ENCODE measurements at regions of chr3 and their contacts with region 1.

Region 1: GRCh38 chr3:127455541-127456450 is 134.7 kb downstream of the TPRA1 start:
- DNase-seq: peak; percentile 67
- H3K4me3 ChIP-seq: peak overlapping the region; percentile 48 to 64 (median 51)
- H3K27ac ChIP-seq: peak overlapping the region; percentile 65
- H3K4me1 ChIP-seq: peaks cover 33% of the 10 kb centered on the region
- H3K27me3 ChIP-seq: no peaks in the 10 kb centered on the region
- CTCF ChIP-seq: peak; percentile 62 to 83

Region 2: GRCh38 chr3:126679318-126679751 is 776.5 kb before region 1 on chr3:
- CTCF ChIA-PET with region 1: no interaction called
- dilution Hi-C with region 1: no loop called
- in situ Hi-C with region 1: loop called (anchors 10 to 25 kb)
- intact Hi-C with region 1: loop called (anchors 1 kb)
- DNase-seq: peak; percentile 55
- H3K4me3 ChIP-seq: peak overlapping the region in 1 of 3 experiments; percentile 15
- H3K27ac ChIP-seq: no peak overlapping the region
- H3K4me1 ChIP-seq: peaks cover 5% of the 10 kb centered on the region
- H3K27me3 ChIP-seq: no peaks in the 10 kb centered on the region
- CTCF ChIP-seq: peak; percentile 90 to 95

Region 3: DNA sequence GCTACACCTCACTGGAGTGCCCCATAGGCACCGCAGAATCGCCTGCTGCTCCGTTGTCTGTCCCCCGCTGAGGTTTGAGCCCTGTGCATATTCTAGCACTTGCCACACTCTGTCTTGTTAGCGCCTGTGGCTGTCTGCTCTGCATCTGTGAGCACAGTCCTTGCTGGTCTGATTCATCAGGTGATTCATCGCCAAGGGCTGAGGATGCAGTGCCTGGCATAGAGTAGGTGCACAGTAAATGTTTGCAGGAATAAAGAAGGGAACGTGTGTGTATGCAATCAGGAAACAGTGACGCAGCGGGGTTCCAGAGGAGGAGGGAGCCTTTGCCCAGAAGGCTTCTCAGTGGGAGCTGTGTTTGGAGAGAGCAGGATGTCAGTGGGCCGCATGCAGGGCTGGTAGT is 596.9 kb before region 1 on chr3:
- CTCF ChIA-PET with region 1: no interaction called
- dilution Hi-C with region 1: no loop called
- in situ Hi-C with region 1: no loop called
- intact Hi-C with region 1: loop called (anchors 5 kb)
- DNase-seq: peak; percentile 97
- H3K4me3 ChIP-seq: no peak overlapping the region
- H3K27ac ChIP-seq: peak overlapping the region; percentile 36
- H3K4me1 ChIP-seq: peaks cover 20% of the 10 kb centered on the region
- H3K27me3 ChIP-seq: no peaks in the 10 kb centered on the region
- CTCF ChIP-seq: no peak

Region 4: GRCh38 chr3:127002195-127003174 is 453.3 kb before region 1 on chr3:
- CTCF ChIA-PET with region 1: interaction called, 8 read pairs
- dilution Hi-C with region 1: no loop called
- in situ Hi-C with region 1: loop called in 1 of 2 experiments (anchors 10 kb)
- intact Hi-C with region 1: loop called (anchors 1 kb)
- DNase-seq: peak; percentile 82
- H3K4me3 ChIP-seq: peak overlapping the region in 2 of 3 experiments; percentile 18 to 20
- H3K27ac ChIP-seq: peak overlapping the region; percentile 42
- H3K4me1 ChIP-seq: peaks cover 63% of the 10 kb centered on the region
- H3K27me3 ChIP-seq: no peaks in the 10 kb centered on the region
- CTCF ChIP-seq: peak; percentile 45 to 64

Region 5: GRCh38 chr3:127177231-127177630 is 278.6 kb before region 1 on chr3:
- CTCF ChIA-PET with region 1: no interaction called
- dilution Hi-C with region 1: no loop called
- in situ Hi-C with region 1: no loop called
- intact Hi-C with region 1: loop called (anchors 5 kb)
- DNase-seq: no peak
- H3K4me3 ChIP-seq: no peak overlapping the region
- H3K27ac ChIP-seq: no peak overlapping the region
- H3K4me1 ChIP-seq: no peaks in the 10 kb centered on the region
- H3K27me3 ChIP-seq: no peaks in the 10 kb centered on the region
- CTCF ChIP-seq: peak in 1 of 2 donors; percentile 35

Region 6: GRCh38 chr3:127288921-127289705 is 166.7 kb before region 1 on chr3:
- CTCF ChIA-PET with region 1: no interaction called
- dilution Hi-C with region 1: no loop called
- in situ Hi-C with region 1: no loop called
- intact Hi-C with region 1: no loop called
- DNase-seq: no peak
- H3K4me3 ChIP-seq: no peak overlapping the region
- H3K27ac ChIP-seq: no peak overlapping the region
- H3K4me1 ChIP-seq: peaks cover 6% of the 10 kb centered on the region
- H3K27me3 ChIP-seq: no peaks in the 10 kb centered on the region
- CTCF ChIP-seq: no peak

Region 7: DNA sequence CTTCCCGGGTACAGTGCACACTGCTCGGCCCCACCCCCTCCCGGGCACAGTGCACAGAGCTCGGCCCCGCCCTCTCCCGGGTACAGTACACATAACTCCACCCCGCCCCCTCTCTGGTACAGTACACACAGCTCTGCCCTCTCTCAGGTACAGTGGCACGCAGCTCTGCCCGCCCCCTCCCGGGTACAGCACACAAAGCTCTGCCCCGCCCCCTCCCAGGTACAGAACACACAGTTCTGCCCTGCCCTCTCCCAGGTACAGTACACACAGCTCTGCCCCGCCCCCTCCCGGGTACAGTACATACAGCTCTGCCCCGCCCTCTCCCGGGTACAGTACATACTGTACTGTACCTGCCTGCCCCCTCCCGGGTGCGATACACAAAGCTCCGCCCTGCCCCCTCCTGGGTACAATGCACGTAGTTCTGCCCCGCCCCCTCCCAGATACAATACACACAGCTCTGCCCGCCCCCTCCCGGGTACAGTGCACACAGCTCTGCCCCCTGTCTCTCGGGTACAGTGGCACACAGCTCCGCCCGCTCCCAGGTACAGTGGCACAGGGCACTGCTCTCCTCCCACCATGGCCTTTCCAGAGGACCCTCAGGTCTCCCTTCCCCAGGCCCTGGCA is 151.6 kb before region 1 on chr3:
- CTCF ChIA-PET with region 1: interaction called, 10 read pairs
- dilution Hi-C with region 1: no loop called
- in situ Hi-C with region 1: no loop called
- intact Hi-C with region 1: no loop called
- DNase-seq: peak; percentile 82
- H3K4me3 ChIP-seq: no peak overlapping the region
- H3K27ac ChIP-seq: peak overlapping the region; percentile 50
- H3K4me1 ChIP-seq: peaks cover 22% of the 10 kb centered on the region
- H3K27me3 ChIP-seq: no peaks in the 10 kb centered on the region
- CTCF ChIP-seq: peak in 1 of 2 donors; percentile 41

Region 8: GRCh38 chr3:127389420-127389819 is 66.4 kb before region 1 on chr3:
- CTCF ChIA-PET with region 1: no interaction called
- dilution Hi-C with region 1: no loop called
- in situ Hi-C with region 1: no loop called
- intact Hi-C with region 1: no loop called
- DNase-seq: peak; percentile 24
- H3K4me3 ChIP-seq: no peak overlapping the region
- H3K27ac ChIP-seq: no peak overlapping the region
- H3K4me1 ChIP-seq: no peaks in the 10 kb centered on the region
- H3K27me3 ChIP-seq: peaks cover 4% of the 10 kb centered on the region
- CTCF ChIP-seq: no peak

Region 9: DNA sequence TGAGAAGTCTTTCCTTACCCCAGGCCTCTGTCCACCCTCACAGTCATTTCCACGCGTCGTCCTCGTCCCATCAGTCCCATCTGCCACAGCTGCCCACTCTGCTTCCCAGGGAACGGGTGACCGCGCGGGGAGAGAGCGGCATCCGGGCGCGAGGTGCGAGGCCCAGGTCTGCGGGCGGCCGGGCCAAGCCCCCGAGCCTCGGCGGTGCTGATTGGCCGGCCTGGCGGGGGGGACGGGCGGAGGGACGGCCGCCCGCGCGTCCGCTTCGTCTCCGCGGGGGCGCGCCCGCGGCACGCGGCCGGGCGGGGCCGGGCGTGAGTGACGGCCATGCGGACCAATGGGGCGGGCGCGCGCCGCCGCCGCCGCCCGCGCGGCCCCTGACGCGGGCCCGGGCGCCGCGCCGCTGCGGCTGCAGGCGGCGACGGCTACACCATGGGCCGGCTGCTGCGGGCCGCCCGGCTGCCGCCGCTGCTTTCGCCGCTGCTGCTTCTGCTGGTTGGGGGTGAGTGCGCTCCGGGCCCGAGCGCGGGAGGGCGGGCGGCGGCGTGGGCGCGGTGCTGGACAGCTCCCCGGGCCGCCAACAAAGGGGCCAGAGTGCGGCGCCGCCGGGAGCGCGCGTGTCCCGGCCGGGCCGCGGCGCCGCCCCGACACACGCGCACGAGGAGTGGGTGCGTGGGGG is 173.1 kb after region 1 on chr3 and contains the start of gene PODXL2:
- CTCF ChIA-PET with region 1: no interaction called
- dilution Hi-C with region 1: no loop called
- in situ Hi-C with region 1: no loop called
- intact Hi-C with region 1: no loop called
- DNase-seq: peak; percentile 26
- H3K4me3 ChIP-seq: peak within 1 kb of the TSS in 2 of 3 experiments; percentile 14 to 24
- H3K27ac ChIP-seq: no peak within 1 kb of the TSS
- H3K4me1 ChIP-seq: peaks cover 10% of the 10 kb centered on the region
- H3K27me3 ChIP-seq: peaks cover 26% of the 10 kb centered on the region
- CTCF ChIP-seq: no peak
- total RNA-seq, gene PODXL2: 1.5 to 4.3 TPM

Measured in mammary epithelial cell (primary cell).